ENCODE measurements at regions of chr10 and their contacts with region 1.

Region 1: GRCh38 chr10:77989081-77989724 is 40.1 kb downstream of the POLR3A start:
- DNase-seq: peak; percentile 49 to 82
- ATAC-seq: peak; percentile 92 to 95 (median 93)
- H3K4me3 ChIP-seq: no peak overlapping the region
- H3K27ac ChIP-seq: peak overlapping the region; percentile 84
- H3K4me1 ChIP-seq: peaks cover 33% of the 10 kb centered on the region
- H3K27me3 ChIP-seq: no peaks in the 10 kb centered on the region
- CTCF ChIP-seq: no peak

Region 2: GRCh38 chr10:77907900-77908717 is 81.1 kb before region 1 on chr10:
- intact Hi-C with region 1: loop called in 1 of 2 experiments (anchors 5 kb)
- DNase-seq: no peak
- ATAC-seq: peak in 3 of 4 donors; percentile 48 to 54 (median 52)
- H3K4me3 ChIP-seq: no peak overlapping the region
- H3K27ac ChIP-seq: no peak overlapping the region
- H3K4me1 ChIP-seq: peaks cover 48% of the 10 kb centered on the region
- H3K27me3 ChIP-seq: no peaks in the 10 kb centered on the region
- CTCF ChIP-seq: peak; percentile 30

Region 3: DNA sequence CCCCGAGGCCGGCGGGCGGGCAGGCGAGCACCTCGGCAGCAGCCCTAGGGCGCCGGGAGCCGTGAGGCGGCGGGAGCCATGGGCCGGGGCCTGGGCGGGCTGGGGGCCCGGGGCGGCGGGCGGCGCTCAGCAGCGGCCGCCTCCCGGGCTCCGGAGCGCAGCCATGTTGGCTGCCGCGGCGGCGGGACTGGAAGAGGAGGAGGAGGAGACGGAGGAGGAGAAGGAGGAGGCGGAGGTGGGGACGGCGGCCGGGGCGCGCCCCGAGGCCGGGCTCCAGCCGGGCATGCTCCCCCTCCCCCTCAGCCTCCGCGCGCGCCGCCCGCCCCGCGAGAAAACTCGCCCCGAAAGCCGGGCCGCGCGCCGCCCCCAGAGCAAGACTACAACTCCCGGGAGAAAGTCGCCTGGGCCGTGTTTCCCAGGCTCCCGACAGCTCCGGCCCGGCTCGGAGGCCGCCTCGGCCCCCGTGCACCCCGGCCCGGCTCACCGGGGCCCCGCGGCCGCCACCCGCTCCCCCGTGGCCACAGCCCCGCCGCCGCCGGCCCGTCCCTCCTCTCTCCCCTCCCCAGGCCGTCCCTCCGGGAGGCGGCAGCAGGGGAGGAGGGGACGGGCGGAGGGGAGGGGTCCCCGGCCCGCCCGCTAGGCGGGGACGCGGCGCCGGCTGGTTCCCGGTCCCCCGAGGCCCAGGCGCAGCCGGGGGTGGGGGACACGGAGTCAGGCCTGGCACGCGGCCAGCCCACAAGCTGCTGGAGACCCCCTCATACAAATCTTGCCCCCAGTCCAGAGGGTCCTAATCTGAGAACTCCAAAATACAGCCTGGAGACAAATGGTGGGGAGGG is 62.4 kb before region 1 on chr10 and contains the start of gene DLG5:
- intact Hi-C with region 1: no loop called
- DNase-seq: peak; percentile 78 to 85
- ATAC-seq: peak; percentile 75 to 82 (median 77)
- H3K4me3 ChIP-seq: peak within 1 kb of the TSS; percentile 90
- H3K27ac ChIP-seq: peak within 1 kb of the TSS; percentile 84
- H3K4me1 ChIP-seq: peaks cover 10% of the 10 kb centered on the region
- H3K27me3 ChIP-seq: no peaks in the 10 kb centered on the region
- CTCF ChIP-seq: no peak
- total RNA-seq, gene DLG5: 36.9 to 62.9 (median 39.9) TPM